ENCODE measurements at regions of chr16 and their contacts with region 1.

Region 1: GRCh38 chr16:12062343-12063005 is 85.9 kb downstream of the SNX29 start:
- DNase-seq: peak; percentile 60 to 84 (median 71)
- ATAC-seq: peak; percentile 74 to 97 (median 91)
- H3K4me3 ChIP-seq: no peak overlapping the region
- H3K27ac ChIP-seq: peak overlapping the region in 11 of 12 donors; percentile 30 to 76 (median 58)
- H3K4me1 ChIP-seq: peaks cover 0 to 30% (median 14%) of the 10 kb centered on the region in 12 donors
- H3K27me3 ChIP-seq: no peaks in the 10 kb centered on the region
- CTCF ChIP-seq: no peak
- POLR2A ChIP-seq: no peak

Region 2: GRCh38 chr16:11977376-11978041 is 85.0 kb before region 1 on chr16:
- intact Hi-C with region 1: loop called in 9 of 10 experiments (anchors 2 to 10 kb)
- DNase-seq: peak in 3 of 5 donors; percentile 14 to 34 (median 19)
- ATAC-seq: peak in 3 of 4 donors; percentile 60 to 73 (median 66)
- H3K4me3 ChIP-seq: peak overlapping the region; percentile 83 to 100 (median 92)
- H3K27ac ChIP-seq: peak overlapping the region in 10 of 12 donors; percentile 65 to 92 (median 82)
- H3K4me1 ChIP-seq: peaks cover 0 to 24% (median 17%) of the 10 kb centered on the region in 12 donors
- H3K27me3 ChIP-seq: no peaks in the 10 kb centered on the region
- CTCF ChIP-seq: no peak
- POLR2A ChIP-seq: no peak

Measured in heart left ventricle (tissue), 16 donors.